CD4-positive, alpha-beta memory T cell (primary cell): ENCODE measurements at regions of chr3 and their contacts with region 1.

Region 1: DNA sequence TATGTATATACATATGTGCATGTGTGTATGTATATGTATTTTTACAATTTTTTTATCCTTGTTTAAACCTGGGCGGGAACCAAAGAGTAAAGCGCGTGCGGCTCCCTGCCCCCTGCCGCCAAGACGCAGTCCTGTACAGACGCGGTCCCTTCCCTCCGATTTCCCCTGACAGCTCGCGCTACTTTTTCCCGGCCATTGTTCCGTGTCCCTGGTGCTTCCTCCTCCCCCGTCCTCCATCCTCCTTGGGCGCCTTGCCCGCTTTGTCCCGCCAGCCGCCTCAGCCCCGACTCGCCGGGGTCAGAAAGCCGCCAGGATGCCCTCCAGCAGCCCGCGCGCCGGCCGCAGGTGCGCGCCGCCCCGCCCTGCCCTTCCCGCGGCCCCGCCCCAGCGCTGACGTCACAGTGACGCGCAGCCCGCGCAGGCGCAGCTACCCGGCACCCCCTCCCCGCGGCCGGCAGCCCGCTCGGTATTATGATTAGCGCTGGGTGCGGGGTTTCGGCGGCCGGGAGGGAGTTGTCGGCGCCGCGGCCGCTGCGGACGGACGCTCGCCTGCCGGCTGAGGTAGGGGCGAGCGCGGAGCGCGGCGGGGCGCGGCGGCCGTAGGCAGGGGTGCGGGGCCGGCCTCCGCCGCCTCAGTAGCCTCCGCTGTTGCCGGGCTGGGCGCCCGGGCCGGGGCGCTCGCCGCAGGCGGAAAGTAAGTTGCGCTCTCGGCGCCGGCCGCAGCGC is at the start of gene SNRK:
- DNase-seq: peak; percentile 86 to 97 (median 92)
- H3K4me3 ChIP-seq: peak within 1 kb of the TSS; percentile 84 to 88
- H3K4me3 Mint-ChIP-seq: peak within 1 kb of the TSS; percentile 98 to 100 (median 99)
- H3K27ac ChIP-seq: peak within 1 kb of the TSS; percentile 78
- H3K27ac Mint-ChIP-seq: peak within 1 kb of the TSS; percentile 99 to 100 (median 100)
- H3K4me1 ChIP-seq: peaks cover 32% of the 10 kb centered on the region
- H3K4me1 Mint-ChIP-seq: peaks cover 28 to 46% (median 32%) of the 10 kb centered on the region in 4 donors
- H3K27me3 ChIP-seq: no peaks in the 10 kb centered on the region
- H3K27me3 Mint-ChIP-seq: peaks cover 0 to 2% of the 10 kb centered on the region in 2 donors
- total RNA-seq, gene SNRK: 104 to 108 TPM

Region 2: GRCh38 chr3:43105596-43106292 is 180.5 kb before region 1 on chr3 and contains the start of gene POMGNT2:
- CTCF ChIA-PET with region 1: no interaction called
- POLR2A ChIA-PET with region 1: no interaction called
- intact Hi-C with region 1: loop called (anchors 2 kb)
- DNase-seq: peak; percentile 82 to 88 (median 87)
- H3K4me3 ChIP-seq: peak within 1 kb of the TSS; percentile 12 to 61
- H3K4me3 Mint-ChIP-seq: peak within 1 kb of the TSS; percentile 82 to 88 (median 84)
- H3K27ac ChIP-seq: peak within 1 kb of the TSS; percentile 58
- H3K27ac Mint-ChIP-seq: peak within 1 kb of the TSS; percentile 24 to 75 (median 65)
- H3K4me1 ChIP-seq: peaks cover 21% of the 10 kb centered on the region
- H3K4me1 Mint-ChIP-seq: peaks cover 11 to 22% (median 14%) of the 10 kb centered on the region in 4 donors
- H3K27me3 ChIP-seq: no peaks in the 10 kb centered on the region
- H3K27me3 Mint-ChIP-seq: peaks cover 0 to 2% of the 10 kb centered on the region in 2 donors
- total RNA-seq, gene POMGNT2: 5.4 TPM

Region 3: DNA sequence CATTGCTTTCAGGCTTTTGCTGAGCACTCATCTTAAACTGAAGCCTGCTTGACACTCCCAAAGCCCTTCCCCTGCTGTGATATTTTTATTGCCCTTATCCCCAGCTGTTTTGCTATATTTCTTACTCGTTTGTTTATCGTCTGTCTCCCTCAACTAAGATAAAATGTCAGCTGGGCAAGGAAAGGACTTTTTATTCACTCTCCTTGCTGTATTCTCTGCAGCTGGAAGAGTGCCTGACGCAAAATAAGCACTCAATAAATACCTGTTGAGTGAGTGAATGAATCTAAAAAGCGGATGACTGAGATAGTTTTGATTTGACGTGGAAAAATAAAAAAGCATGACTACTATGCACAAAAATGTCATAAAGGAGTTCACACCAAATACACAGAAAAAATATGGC is 95.6 kb before region 1 on chr3:
- CTCF ChIA-PET with region 1: no interaction called
- POLR2A ChIA-PET with region 1: interaction called, 11 read pairs
- intact Hi-C with region 1: loop called (anchors 10 kb)
- DNase-seq: no peak
- H3K4me3 ChIP-seq: no peak overlapping the region
- H3K4me3 Mint-ChIP-seq: no peak overlapping the region
- H3K27ac ChIP-seq: no peak overlapping the region
- H3K27ac Mint-ChIP-seq: no peak overlapping the region
- H3K4me1 ChIP-seq: peaks cover 46% of the 10 kb centered on the region
- H3K4me1 Mint-ChIP-seq: peaks cover 34 to 44% (median 40%) of the 10 kb centered on the region in 4 donors
- H3K27me3 ChIP-seq: no peaks in the 10 kb centered on the region
- H3K27me3 Mint-ChIP-seq: no peaks in the 10 kb centered on the region

Region 4: GRCh38 chr3:43302116-43302880 is 16.0 kb after region 1 on chr3:
- CTCF ChIA-PET with region 1: interaction called, 9 read pairs
- POLR2A ChIA-PET with region 1: interaction called, 106 read pairs
- intact Hi-C with region 1: loop called (anchors 2 kb)
- DNase-seq: no peak
- H3K4me3 ChIP-seq: no peak overlapping the region
- H3K4me3 Mint-ChIP-seq: peak overlapping the region in 7 of 8 donors; percentile 49 to 87 (median 74)
- H3K27ac ChIP-seq: no peak overlapping the region
- H3K27ac Mint-ChIP-seq: peak overlapping the region in 6 of 7 donors; percentile 49 to 81 (median 68)
- H3K4me1 ChIP-seq: peaks cover 90% of the 10 kb centered on the region
- H3K4me1 Mint-ChIP-seq: peaks cover 53 to 78% (median 64%) of the 10 kb centered on the region in 4 donors
- H3K27me3 ChIP-seq: no peaks in the 10 kb centered on the region
- H3K27me3 Mint-ChIP-seq: no peaks in the 10 kb centered on the region

Region 5: DNA sequence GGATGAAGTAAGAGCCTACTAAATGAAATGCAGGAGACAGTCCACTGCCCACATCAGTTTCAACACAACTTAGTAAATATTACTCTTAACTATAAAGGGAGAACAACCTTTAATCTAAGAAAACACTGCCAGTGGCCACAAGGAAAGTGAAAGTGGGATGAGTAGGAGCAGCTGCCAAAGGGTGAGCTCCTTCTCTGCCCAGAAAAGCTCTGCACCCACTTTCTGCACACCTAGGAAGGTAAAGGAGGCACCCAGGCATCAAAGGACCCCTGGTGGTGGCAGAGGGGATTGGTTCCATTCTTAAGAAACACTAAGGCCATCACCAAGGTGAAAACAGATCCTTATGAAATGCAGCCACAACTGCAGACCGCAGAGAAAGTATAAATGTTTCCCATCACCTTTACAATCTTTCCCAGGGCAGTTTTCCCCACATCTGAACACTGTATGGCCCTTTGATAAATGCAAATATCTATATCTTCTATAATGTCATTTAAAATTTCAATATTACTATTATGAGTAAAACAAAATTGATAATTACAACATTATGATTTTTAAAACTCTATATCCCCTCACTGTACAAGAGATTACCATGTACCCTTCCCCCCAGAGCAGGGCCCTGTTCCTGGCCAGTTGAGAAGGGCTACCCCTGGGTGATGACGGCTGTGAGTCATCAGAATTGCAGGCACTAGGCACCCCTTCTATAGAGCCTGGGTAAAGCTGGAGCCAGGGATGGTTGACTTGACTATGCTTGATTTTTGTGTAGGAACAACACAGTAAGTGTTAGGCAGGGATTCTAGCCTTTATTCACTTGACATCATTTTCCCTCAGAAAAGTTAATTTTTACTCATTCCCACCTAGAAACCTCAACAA is 92.0 kb after region 1 on chr3:
- CTCF ChIA-PET with region 1: interaction called, 11 read pairs
- POLR2A ChIA-PET with region 1: interaction called, 13 read pairs
- intact Hi-C with region 1: loop called (anchors 1 kb)
- DNase-seq: peak; percentile 71 to 76 (median 73)
- H3K4me3 ChIP-seq: no peak overlapping the region
- H3K4me3 Mint-ChIP-seq: peak overlapping the region in 2 of 8 donors; percentile 11 to 14
- H3K27ac ChIP-seq: no peak overlapping the region
- H3K27ac Mint-ChIP-seq: peak overlapping the region in 6 of 7 donors; percentile 38 to 84 (median 69)
- H3K4me1 ChIP-seq: peaks cover 9% of the 10 kb centered on the region
- H3K4me1 Mint-ChIP-seq: peaks cover 9 to 26% (median 17%) of the 10 kb centered on the region in 4 donors
- H3K27me3 ChIP-seq: no peaks in the 10 kb centered on the region
- H3K27me3 Mint-ChIP-seq: no peaks in the 10 kb centered on the region

Region 6: DNA sequence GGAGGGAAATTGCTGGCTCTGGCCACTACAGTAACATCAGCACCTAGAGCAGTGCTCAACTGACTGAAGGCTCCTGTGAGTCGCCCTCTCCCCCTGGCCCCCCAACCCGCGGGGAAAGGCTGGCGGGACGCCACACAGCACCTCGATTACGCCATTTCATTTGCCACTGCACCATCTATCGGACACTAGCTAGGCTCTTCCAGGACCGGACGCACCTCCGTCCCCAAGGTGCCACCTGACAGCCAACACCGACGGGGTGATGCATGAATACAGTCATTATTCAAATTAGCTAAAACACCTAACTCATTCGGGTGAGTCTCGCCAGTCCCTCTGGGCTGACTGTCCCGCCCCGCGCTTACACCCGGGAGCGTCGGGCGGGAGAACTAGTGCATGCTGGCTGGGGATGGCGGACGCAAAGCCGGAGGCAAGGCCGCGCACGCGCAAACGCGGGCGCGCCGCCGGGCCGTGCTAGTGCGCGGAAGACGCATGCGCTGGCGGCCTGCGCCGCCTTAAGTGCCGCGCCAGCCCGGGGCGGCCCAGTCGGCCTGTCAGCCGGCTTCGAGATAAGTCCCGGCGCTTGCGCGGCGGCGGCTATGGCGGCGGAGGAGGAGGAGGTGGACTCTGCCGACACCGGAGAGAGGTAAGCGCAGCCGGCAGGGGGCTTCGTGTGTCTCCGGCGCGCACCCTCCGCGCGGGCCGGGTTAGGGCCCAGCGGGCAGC is 404.3 kb after region 1 on chr3 and contains the start of gene ABHD5:
- CTCF ChIA-PET with region 1: no interaction called
- POLR2A ChIA-PET with region 1: no interaction called
- intact Hi-C with region 1: loop called (anchors 5 kb)
- DNase-seq: peak; percentile 95 to 97 (median 96)
- H3K4me3 ChIP-seq: peak within 1 kb of the TSS; percentile 38 to 98
- H3K4me3 Mint-ChIP-seq: peak within 1 kb of the TSS; percentile 91 to 97 (median 93)
- H3K27ac ChIP-seq: peak within 1 kb of the TSS; percentile 79
- H3K27ac Mint-ChIP-seq: peak within 1 kb of the TSS; percentile 89 to 98 (median 94)
- H3K4me1 ChIP-seq: peaks cover 20% of the 10 kb centered on the region
- H3K4me1 Mint-ChIP-seq: peaks cover 23 to 35% (median 30%) of the 10 kb centered on the region in 4 donors
- H3K27me3 ChIP-seq: no peaks in the 10 kb centered on the region
- H3K27me3 Mint-ChIP-seq: no peaks in the 10 kb centered on the region
- total RNA-seq, gene ABHD5: 6.2 to 7.0 TPM